PC-3 (cell line): ENCODE measurements at regions of chr2 and their contacts with region 1.

Region 1: DNA sequence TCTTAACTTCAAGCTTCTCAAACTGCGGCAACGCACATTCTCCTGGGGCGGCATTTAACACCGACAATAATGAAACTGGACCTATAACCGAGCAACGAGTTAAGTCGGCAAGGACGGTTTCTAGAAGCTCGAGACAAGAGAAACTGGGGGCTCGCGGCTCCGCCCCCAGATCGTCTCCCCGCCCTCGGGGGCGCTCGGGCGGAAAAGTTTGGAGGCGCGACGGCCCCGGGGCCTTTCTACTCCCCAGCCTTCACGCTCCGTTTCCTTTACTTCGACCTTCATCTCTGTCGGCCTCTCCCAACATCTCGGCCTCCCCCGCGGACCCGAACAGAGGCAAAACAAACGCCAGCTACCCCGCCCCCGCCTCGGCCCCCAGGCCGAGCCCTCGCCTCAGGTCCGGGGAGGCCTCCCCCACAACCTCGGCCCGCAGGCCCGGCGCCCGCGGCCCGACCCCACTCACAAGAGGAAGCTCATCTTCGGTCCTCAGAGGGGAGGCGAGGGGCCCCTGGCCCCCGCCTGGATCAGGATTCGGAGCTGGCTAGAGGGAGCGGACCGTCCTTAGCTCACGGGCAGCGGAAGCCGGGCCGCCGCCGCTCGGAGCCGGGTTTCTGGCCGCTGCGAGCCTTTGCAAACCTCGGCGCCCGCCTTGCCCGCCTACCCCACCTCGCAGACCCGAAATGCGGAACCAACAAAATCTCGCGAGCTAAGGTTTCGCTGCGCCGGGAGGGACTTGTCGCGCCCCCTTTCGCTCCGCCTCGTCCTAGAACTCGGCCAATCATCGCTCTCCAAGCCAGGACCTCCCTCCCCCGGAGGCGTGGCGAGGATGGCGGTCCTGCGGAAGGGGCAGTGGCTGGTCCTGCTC is at the start of gene MOB1A:
- DNase-seq: peak; percentile 99
- ATAC-seq: peak; percentile 98
- H3K4me3 ChIP-seq: peak within 1 kb of the TSS; percentile 84
- H3K27ac ChIP-seq: peak within 1 kb of the TSS; percentile 42
- H3K4me1 ChIP-seq: peaks cover 11% of the 10 kb centered on the region
- H3K27me3 ChIP-seq: no peaks in the 10 kb centered on the region
- CTCF ChIP-seq: no peak
- total RNA-seq, gene MOB1A: 51.6 and 69.8 TPM in 2 replicates

Region 2: DNA sequence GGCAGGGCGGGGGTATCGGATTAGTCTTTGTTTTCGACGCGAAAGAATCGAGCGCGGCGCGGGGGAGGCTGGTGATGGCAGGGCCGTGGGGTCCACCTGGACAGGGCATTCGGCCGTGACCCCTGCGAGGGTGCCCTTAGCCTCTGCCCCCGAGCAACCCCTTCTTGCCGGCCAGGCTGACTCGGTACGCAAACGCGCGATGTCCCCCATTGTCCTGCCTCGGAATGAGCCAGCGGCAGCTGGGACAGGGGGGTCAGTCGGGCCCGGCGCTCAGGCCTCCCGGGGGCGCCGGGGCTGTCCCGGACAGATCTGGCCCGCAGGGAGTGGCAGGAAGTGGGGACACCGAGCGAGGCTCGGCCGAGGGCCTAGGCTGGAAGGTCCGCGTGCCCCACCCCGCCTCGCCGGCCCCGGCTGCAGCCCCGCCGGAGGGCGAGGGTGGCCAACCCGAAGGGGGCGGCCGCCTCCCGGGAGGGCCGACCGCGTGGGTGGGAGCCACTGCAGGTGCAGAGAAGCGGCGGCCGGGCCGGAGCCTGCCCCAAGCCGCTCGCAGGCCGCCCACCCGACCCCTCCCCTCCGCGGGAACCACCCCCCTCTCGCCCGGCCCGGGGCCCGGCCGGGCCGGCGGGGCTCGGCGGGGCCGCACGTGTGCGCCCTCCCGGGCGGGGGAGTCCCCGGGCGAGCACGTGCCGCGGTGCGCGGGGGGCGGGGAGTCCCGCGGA is 194.1 kb before region 1 on chr2 and contains the start of gene TET3:
- CTCF ChIA-PET with region 1: no interaction called
- POLR2A ChIA-PET with region 1: interaction called, 10 read pairs
- intact Hi-C with region 1: no loop called
- DNase-seq: peak; percentile 37
- ATAC-seq: peak; percentile 2; the same call in 1 of the 2 replicates
- H3K4me3 ChIP-seq: peak within 1 kb of the TSS; percentile 81
- H3K27ac ChIP-seq: peak within 1 kb of the TSS; percentile 98
- H3K4me1 ChIP-seq: peaks cover 78% of the 10 kb centered on the region
- H3K27me3 ChIP-seq: no peaks in the 10 kb centered on the region
- CTCF ChIP-seq: no peak
- total RNA-seq, gene TET3: 6.1 and 10.1 TPM in 2 replicates

Region 3: GRCh38 chr2:74198461-74199274 is 20.2 kb after region 1 on chr2 and contains the start of gene MTHFD2:
- CTCF ChIA-PET with region 1: interaction called, 7 read pairs
- POLR2A ChIA-PET with region 1: interaction called, 5 read pairs
- intact Hi-C with region 1: loop called (anchors 2 kb)
- DNase-seq: peak; percentile 99
- ATAC-seq: peak; percentile 92
- H3K4me3 ChIP-seq: peak within 1 kb of the TSS; percentile 85
- H3K27ac ChIP-seq: peak within 1 kb of the TSS; percentile 78
- H3K4me1 ChIP-seq: peaks cover 26% of the 10 kb centered on the region
- H3K27me3 ChIP-seq: no peaks in the 10 kb centered on the region
- CTCF ChIP-seq: peak; percentile 71
- total RNA-seq, gene MTHFD2: 115 and 118 TPM in 2 replicates